ENCODE measurements at regions of chr4 and their contacts with region 1.

Region 1: GRCh38 chr4:8342651-8343261 is 73.2 kb downstream of the HTRA3 start:
- DNase-seq: no peak
- H3K4me3 ChIP-seq: no peak overlapping the region
- H3K27ac ChIP-seq: peak overlapping the region in 1 of 2 donors; percentile 52
- H3K4me1 ChIP-seq: no peaks in the 10 kb centered on the region
- H3K27me3 ChIP-seq: no peaks in the 10 kb centered on the region
- CTCF ChIP-seq: no peak
- POLR2A ChIP-seq: no peak

Region 2: DNA sequence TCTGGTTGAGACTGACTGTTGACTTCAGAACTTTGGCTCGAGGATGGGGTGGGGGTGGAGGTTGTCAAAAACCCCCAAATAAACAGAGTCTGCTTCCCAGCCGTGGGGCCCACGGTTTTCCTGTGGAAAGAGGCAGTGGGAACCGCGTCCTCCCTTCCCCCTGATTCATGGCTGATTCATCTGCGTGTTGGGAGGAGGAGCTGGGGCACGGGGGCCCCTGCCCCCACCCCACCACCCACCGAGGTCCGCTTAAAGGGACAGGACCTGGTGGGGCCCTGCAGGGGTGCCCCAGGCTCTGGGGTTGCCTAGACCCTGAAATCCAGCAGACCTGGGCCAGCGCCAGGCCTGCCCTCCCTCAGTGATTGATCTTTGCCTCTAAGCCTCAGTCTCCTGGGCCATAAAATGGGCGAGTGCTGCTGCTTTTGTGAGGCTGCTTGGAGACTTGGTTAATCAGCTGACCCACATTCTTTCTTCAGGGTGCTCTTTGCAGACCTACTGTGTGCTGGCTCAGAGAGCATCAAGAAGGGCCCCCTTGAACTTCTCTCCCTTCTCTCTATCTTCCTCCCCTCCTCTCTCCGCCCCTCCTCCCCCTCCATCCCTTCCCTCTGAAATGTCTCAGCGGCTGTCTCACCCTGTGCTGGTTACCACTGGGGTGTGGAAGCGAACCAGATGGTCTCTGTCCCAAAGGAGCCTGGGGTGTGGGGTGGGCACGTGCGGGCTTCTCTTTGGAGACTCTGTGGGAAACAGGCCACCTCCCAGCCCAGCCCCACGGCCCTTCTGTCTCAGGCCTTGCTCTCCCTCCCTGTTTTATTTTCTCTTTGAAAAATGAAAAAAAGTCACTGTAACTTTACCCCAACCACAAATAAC is 64.1 kb before region 1 on chr4:
- intact Hi-C with region 1: loop called (anchors 2 kb)
- DNase-seq: no peak
- H3K4me3 ChIP-seq: no peak overlapping the region
- H3K27ac ChIP-seq: peak overlapping the region in 1 of 2 donors; percentile 80
- H3K4me1 ChIP-seq: no peaks in the 10 kb centered on the region
- H3K27me3 ChIP-seq: no peaks in the 10 kb centered on the region
- CTCF ChIP-seq: no peak
- POLR2A ChIP-seq: no peak

Region 3: GRCh38 chr4:8393593-8394038 is 50.9 kb after region 1 on chr4:
- intact Hi-C with region 1: loop called (anchors 1 kb)
- DNase-seq: peak in 1 of 2 donors; percentile 43
- H3K4me3 ChIP-seq: no peak overlapping the region
- H3K27ac ChIP-seq: peak overlapping the region; percentile 49 to 62
- H3K4me1 ChIP-seq: no peaks in the 10 kb centered on the region
- H3K27me3 ChIP-seq: no peaks in the 10 kb centered on the region
- CTCF ChIP-seq: no peak
- POLR2A ChIP-seq: no peak

Measured in breast epithelium (tissue), 4 donors.